Heart right ventricle (tissue), 16 donors: ENCODE measurements at regions of chr3 and their contacts with region 1.

Region 1: DNA sequence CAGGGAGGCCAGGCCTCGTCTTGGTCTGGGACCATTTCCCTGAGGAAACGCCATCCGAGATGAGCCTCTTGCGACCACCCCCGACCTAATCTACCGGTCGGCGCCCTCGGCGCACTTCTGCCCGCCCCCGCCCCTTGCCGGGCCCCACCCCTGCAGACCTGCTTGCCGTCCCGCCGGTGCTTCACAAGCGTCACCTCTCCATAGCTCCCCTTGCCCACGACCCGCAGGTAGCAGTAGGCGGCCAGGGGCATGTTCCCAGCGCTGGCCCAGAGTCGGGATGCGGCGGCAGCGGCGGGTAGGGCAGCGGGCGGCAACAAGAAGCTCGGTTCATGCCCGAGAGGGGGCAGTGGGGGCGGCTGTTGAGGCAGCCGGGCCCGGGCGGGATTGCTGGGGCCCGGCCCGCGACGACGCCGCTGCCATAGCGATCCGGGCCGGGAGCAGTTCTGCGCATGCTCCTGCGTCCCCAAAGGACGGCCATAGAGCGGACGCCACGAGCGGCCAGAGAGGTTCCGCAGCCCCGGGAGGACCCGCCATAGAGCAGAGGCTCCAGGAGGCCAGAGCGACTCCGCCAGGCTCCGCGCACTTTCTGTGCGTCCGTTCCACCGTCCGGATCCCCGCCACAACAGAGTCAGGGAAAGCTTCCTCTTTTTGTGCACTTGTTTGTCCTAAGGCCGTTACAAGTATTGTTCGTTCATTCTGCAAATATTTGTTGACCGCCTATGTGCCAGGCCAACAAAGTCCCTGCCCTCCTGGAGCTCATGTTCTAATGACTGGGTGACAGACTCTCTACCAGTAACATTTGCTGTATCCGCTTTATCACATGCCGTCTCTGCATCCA is at the start of gene NEK4:
- DNase-seq: peak; percentile 95
- ATAC-seq: peak; percentile 99 to 100 (median 100)
- H3K4me3 ChIP-seq: peak within 1 kb of the TSS; percentile 59 to 98 (median 82)
- H3K27ac ChIP-seq: peak within 1 kb of the TSS in 9 of 10 donors; percentile 75 to 90 (median 85)
- H3K4me1 ChIP-seq: peaks cover 0 to 33% (median 14%) of the 10 kb centered on the region in 9 donors
- H3K27me3 ChIP-seq: no peaks in the 10 kb centered on the region
- CTCF ChIP-seq: peak in 2 of 9 donors; percentile 21 to 25
- total RNA-seq, gene NEK4: 12.9 to 21.4 (median 17.2) TPM

Region 2: DNA sequence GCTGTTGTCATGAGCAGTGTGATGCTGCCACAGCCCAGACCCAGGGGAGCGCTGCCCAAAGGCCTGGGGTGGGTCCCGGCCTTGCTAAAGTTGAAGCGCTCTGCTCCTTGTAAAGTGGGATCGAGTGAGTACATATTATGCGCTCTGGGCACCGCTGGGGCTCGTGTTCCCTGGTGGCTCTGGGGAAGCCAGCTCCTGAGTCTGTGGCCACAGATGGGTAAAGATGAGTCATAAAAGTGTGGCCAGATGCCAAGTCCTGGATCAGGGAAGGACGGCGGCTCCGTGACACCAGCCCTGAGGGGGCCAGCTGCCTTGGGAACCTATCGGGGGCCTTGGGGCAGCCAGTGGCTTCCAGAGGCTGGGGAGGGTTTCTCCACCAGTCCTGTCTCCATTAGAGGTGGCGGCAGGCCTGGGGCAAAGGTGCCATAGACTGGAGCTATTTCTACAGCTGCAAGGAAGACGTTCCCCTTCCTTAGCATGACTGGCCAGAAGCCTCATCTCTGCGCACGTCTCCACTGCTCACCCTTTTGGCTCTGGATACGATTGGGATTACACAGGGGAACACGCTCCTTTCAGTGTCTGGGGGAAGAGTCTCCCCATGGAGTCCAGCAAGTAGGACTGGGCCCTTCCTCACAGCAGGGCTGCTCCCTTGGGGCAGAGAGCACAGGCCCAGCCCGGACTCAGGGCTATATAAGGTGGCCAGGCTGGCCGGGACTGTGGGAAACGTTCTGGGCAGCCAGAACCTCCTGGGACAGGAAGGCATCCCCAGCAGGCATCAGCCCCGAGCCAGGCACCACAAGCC is 61.0 kb after region 1 on chr3:
- intact Hi-C with region 1: loop called in 1 of 10 experiments (anchors 5 kb)
- DNase-seq: peak; percentile 41 to 54
- ATAC-seq: peak in 7 of 8 donors; percentile 2 to 45 (median 22)
- H3K4me3 ChIP-seq: peak overlapping the region in 1 of 10 donors; percentile 5
- H3K27ac ChIP-seq: peak overlapping the region in 8 of 10 donors; percentile 3 to 58 (median 34)
- H3K4me1 ChIP-seq: peaks cover 15 to 55% (median 38%) of the 10 kb centered on the region in 9 donors
- H3K27me3 ChIP-seq: no peaks in the 10 kb centered on the region
- CTCF ChIP-seq: no peak

Region 3: DNA sequence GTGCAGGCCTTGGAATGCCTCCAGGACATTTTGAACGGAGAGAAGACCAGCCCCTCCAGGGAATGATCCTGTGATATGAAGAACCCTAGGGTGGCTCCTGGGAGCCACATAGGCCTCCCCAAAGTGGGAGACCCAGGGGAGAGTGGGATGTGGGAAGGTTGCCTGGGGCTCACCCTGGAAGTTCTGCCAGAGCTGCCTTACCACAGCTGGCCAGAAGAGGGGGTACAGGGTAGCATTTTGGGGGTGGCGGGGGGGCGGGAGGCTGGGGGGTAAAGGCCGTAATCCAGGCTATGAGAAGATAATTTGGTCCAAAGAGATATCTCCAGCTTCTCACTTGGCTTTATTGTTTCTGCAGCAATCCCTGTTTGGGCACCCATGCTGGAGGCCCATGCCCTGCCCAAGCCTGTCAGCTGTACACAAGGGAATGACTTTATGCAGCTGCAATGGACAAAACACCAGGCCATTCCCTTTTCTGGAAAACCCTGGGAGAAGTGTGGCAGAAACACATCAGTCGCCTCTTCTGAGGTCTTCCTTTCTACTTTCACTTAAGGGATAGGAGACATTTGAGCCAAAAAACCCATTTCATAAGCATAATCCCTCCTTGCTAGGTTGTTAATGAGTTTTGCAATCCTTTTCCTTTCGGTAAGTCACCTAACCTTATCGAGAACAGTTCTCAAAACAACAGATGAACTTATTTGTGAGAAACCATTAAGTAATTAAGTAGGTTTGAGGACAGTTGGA is 75.1 kb after region 1 on chr3:
- intact Hi-C with region 1: loop called in 1 of 10 experiments (anchors 5 kb)
- DNase-seq: peak in 1 of 2 donors; percentile 41
- ATAC-seq: peak in 5 of 8 donors; percentile 11 to 53 (median 25)
- H3K4me3 ChIP-seq: peak overlapping the region in 4 of 10 donors; percentile 7 to 15 (median 12)
- H3K27ac ChIP-seq: peak overlapping the region; percentile 48 to 84 (median 73)
- H3K4me1 ChIP-seq: peaks cover 22 to 64% (median 47%) of the 10 kb centered on the region in 9 donors
- H3K27me3 ChIP-seq: no peaks in the 10 kb centered on the region
- CTCF ChIP-seq: peak; percentile 6 to 61 (median 51)

Region 4: GRCh38 chr3:52880474-52880873 is 109.8 kb after region 1 on chr3:
- intact Hi-C with region 1: loop called in 1 of 10 experiments (anchors 10 kb)
- DNase-seq: no peak
- ATAC-seq: no peak
- H3K4me3 ChIP-seq: no peak overlapping the region
- H3K27ac ChIP-seq: no peak overlapping the region
- H3K4me1 ChIP-seq: peaks cover 0 to 5% (median 1%) of the 10 kb centered on the region in 9 donors
- H3K27me3 ChIP-seq: no peaks in the 10 kb centered on the region
- CTCF ChIP-seq: no peak

Region 5: GRCh38 chr3:52897130-52898122 is 126.7 kb after region 1 on chr3 and contains the start of gene STIMATE:
- intact Hi-C with region 1: loop called in 2 of 10 experiments (anchors 1 to 10 kb)
- DNase-seq: peak; percentile 88 to 90
- ATAC-seq: peak; percentile 97 to 99 (median 98)
- H3K4me3 ChIP-seq: peak within 1 kb of the TSS; percentile 33 to 98 (median 90)
- H3K27ac ChIP-seq: peak within 1 kb of the TSS in 9 of 10 donors; percentile 47 to 79 (median 70)
- H3K4me1 ChIP-seq: peaks cover 8 to 53% (median 46%) of the 10 kb centered on the region in 9 donors
- H3K27me3 ChIP-seq: no peaks in the 10 kb centered on the region
- CTCF ChIP-seq: peak in 2 of 9 donors; percentile 19 to 21
- total RNA-seq, gene STIMATE: 4.0 to 9.7 (median 7.3) TPM

Region 6: GRCh38 chr3:52998730-52999509 is 228.2 kb after region 1 on chr3:
- intact Hi-C with region 1: no loop called
- DNase-seq: no peak
- ATAC-seq: peak in 3 of 8 donors; percentile 17 to 64 (median 27)
- H3K4me3 ChIP-seq: no peak overlapping the region
- H3K27ac ChIP-seq: no peak overlapping the region
- H3K4me1 ChIP-seq: no peaks in the 10 kb centered on the region
- H3K27me3 ChIP-seq: no peaks in the 10 kb centered on the region
- CTCF ChIP-seq: no peak